ENCODE measurements at regions of chr16 and their contacts with region 1.

Region 1: DNA sequence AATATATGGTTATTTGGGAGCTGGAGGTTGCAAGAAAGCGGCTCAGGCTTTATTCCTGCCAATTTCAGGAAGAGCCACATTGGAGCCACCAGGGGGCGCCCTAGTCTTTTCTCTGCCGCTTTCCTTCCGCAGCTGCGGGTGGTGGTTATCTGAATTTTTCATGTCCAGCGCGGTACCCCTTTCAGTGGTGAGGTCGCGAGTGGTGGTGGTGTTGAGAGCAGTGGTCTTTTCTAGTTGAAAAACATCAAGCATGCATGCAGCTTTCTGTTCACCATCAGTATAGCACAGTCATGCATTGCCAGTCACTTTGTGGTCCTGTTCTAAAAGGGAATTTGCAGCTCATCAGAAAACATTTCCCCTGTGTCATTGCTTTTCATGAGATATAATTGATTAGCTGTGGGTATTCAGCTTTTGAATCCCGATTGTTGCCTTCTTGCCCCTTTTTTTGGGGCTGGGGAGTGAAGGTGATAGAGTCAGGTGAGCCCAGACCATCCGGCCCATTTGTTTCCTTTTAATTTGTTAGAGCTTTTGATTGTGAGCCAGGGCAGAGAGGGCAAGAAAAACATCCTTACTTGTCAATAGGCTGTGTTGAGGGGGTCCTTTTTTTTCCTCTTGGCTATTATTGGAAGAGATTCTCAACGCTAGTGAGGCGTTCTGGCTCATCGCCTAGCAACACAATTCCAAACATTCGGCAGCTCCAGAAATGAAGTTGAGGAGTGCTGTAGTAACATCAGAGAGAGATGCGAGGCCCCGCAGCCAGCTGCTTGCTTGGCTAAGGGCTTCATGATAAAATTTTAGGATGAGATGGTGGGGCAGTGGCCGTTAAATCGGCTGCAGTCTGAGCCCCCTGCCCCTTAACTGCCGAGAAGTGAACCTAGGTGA is 119.0 kb downstream of the SNX29 start:
- DNase-seq: peak in 34 of 35 experiments; percentile 21 to 81 (median 54)
- ATAC-seq: peak in 3 of 4 experiments; percentile 44 to 67 (median 46)
- H3K4me3 ChIP-seq: peak overlapping the region; percentile 2 to 25
- H3K4me3 Mint-ChIP-seq: peak overlapping the region; percentile 50 to 65 (median 53)
- H3K27ac ChIP-seq: no peak overlapping the region
- H3K27ac Mint-ChIP-seq: no peak overlapping the region
- H3K4me1 ChIP-seq: peaks cover 2 to 11% of the 10 kb centered on the region in 2 experiments
- H3K4me1 Mint-ChIP-seq: peaks cover 23 to 35% (median 30%) of the 10 kb centered on the region in 3 donors
- H3K27me3 ChIP-seq: no peaks in the 10 kb centered on the region
- H3K27me3 Mint-ChIP-seq: no peaks in the 10 kb centered on the region

Region 2: DNA sequence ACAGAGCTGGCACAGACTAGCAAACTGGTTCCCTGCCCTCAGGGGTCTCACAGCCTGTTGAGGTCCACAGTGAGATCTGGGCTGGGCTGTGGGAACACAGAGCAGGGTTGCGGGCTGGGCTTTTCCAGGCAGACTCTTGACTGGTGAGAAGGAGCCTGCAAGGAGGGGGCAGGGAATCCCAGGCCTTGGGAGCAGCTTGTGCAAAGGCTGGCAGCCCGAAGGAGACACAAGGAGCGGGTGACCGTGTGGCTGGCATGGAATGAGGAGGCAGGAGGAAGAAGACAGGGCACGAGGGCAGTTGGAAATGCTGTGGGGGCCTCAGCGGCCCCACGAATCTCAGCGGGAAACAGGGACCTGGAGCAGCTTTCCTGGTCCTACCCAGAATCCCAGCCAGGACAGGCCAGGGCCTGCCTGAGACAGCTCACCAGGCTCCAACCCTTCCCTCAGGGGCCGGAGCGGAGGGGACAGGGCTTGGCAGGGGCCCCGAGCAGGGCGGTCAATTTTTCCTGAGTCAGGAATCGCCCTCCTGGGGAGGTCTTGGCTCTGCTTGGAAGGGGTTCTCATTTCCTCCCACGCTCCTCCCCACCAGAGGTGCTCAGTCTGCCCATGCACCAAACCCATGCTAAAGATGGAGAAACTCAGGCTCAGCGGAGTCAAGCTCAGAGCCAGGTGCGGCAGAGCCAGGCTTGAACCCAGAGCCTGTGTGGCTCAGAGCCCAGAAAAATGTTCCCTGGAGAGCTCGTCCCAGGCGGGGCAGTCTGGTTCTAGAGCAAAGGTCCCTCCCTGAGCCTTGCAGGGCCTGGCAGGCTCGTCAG is 436.4 kb before region 1 on chr16:
- CTCF ChIA-PET with region 1: interaction called in 1 of 2 experiments, 10 read pairs
- POLR2A ChIA-PET with region 1: no interaction called
- DNase-seq: no peak
- ATAC-seq: no peak
- H3K4me3 ChIP-seq: no peak overlapping the region
- H3K4me3 Mint-ChIP-seq: no peak overlapping the region
- H3K27ac ChIP-seq: no peak overlapping the region
- H3K27ac Mint-ChIP-seq: no peak overlapping the region
- H3K4me1 ChIP-seq: peaks cover 6 to 29% of the 10 kb centered on the region in 2 experiments
- H3K4me1 Mint-ChIP-seq: peaks cover 15 to 30% (median 18%) of the 10 kb centered on the region in 3 donors
- H3K27me3 ChIP-seq: peaks cover 0 to 6% of the 10 kb centered on the region in 2 experiments
- H3K27me3 Mint-ChIP-seq: no peaks in the 10 kb centered on the region

Region 3: DNA sequence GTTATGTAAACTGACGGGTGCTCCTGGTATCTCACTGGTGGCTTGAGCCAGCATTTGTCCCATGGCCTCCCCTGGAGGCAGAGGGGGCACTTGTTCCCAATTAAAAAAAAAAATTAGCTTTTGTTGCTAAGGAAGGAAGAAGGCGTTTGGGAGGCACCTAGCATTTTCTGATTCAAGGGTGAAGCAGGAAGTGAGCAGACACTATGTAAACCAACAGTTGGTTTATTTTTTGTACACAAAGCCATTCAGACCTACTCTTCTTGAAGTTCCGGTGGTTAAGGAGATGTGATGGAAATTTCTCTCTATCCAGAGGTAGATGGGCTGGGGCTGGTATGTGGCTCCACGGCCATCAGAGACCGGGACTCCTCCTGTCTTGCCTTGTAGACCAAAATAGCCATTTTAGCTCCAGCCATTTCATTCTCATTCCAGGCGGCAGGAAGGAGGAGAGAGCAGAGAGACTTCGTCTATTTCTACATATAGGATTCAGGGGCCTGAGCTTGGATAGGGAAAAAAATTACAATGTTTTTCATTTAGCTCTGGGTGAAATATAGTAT is 16.0 kb before region 1 on chr16:
- CTCF ChIA-PET with region 1: interaction called, 13 read pairs
- POLR2A ChIA-PET with region 1: interaction called in 1 of 2 experiments, 5 read pairs
- DNase-seq: peak in 1 of 35 experiments; percentile 52
- ATAC-seq: peak; percentile 23 to 35 (median 28)
- H3K4me3 ChIP-seq: peak overlapping the region in 1 of 2 donors; percentile 44
- H3K4me3 Mint-ChIP-seq: peak overlapping the region; percentile 59 to 70 (median 59)
- H3K27ac ChIP-seq: peak overlapping the region; percentile 86
- H3K27ac Mint-ChIP-seq: peak overlapping the region; percentile 93 to 97
- H3K4me1 ChIP-seq: peaks cover 49 to 78% of the 10 kb centered on the region in 2 experiments
- H3K4me1 Mint-ChIP-seq: peaks cover 83% of the 10 kb centered on the region in 3 donors
- H3K27me3 ChIP-seq: no peaks in the 10 kb centered on the region
- H3K27me3 Mint-ChIP-seq: no peaks in the 10 kb centered on the region